ENCODE measurements at regions of chr19 and their contacts with region 1.

Region 1: GRCh38 chr19:40750059-40750873 is at the start of gene ACTMAP:
- DNase-seq: peak; percentile 100
- H3K4me3 Mint-ChIP-seq: peak within 1 kb of the TSS; percentile 99
- H3K27ac Mint-ChIP-seq: peak within 1 kb of the TSS; percentile 99
- H3K4me1 Mint-ChIP-seq: peaks cover 27% of the 10 kb centered on the region
- H3K27me3 Mint-ChIP-seq: no peaks in the 10 kb centered on the region
- total RNA-seq, gene ACTMAP: 9.5 and 10.0 TPM in 2 replicates

Region 2: DNA sequence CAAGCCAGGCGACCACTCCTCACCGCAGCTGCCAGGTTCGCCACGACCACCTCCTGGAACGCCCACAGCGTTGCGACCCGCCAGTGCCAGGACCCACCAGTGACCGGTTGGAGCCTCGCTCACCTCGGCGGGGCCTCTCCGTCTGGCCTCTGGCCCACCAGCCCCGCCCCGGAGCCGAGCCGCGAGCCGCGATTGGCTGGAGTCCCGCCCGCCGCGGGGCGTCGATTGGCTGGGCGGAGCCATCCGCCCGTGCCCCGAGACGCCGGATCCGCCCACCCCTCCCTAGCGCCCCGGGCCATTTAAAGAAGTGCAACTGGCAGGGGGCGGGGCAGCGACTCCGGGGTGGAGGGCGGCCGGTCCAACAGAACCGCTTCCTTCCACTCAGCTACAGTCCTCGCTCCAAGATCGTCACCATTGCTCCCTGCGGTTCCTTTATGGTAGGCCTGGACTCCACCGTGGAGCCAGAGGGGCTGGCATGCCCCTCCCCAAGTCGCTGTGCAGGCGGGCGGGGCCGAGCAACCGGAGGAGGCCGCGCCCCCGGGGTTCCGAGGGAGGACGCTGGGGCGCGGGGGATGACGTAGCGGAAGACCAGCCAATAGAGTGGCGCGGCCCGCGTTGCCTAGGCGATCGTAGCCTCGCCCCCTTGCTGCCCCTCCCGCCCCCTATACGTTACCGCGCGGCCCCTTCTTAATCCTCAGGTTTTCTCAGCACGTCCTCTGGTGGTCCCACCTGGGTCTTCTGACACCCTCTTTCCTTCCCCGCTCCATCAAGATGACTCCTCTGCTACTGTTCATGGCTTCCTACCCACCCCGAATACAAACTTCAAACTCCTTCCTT is 305.9 kb before region 1 on chr19 and contains the start of gene SERTAD3:
- intact Hi-C with region 1: loop called (anchors 1 kb)
- DNase-seq: peak; percentile 97
- H3K4me3 Mint-ChIP-seq: peak within 1 kb of the TSS; percentile 97
- H3K27ac Mint-ChIP-seq: peak within 1 kb of the TSS; percentile 97
- H3K4me1 Mint-ChIP-seq: peaks cover 26% of the 10 kb centered on the region
- H3K27me3 Mint-ChIP-seq: no peaks in the 10 kb centered on the region
- total RNA-seq, gene SERTAD3: 6.4 and 10.0 TPM in 2 replicates

Region 3: GRCh38 chr19:40578442-40578908 is 171.8 kb before region 1 on chr19:
- intact Hi-C with region 1: no loop called
- DNase-seq: no peak
- H3K4me3 Mint-ChIP-seq: peak overlapping the region; percentile 86
- H3K27ac Mint-ChIP-seq: peak overlapping the region; percentile 5
- H3K4me1 Mint-ChIP-seq: peaks cover 17% of the 10 kb centered on the region
- H3K27me3 Mint-ChIP-seq: no peaks in the 10 kb centered on the region

Region 4: DNA sequence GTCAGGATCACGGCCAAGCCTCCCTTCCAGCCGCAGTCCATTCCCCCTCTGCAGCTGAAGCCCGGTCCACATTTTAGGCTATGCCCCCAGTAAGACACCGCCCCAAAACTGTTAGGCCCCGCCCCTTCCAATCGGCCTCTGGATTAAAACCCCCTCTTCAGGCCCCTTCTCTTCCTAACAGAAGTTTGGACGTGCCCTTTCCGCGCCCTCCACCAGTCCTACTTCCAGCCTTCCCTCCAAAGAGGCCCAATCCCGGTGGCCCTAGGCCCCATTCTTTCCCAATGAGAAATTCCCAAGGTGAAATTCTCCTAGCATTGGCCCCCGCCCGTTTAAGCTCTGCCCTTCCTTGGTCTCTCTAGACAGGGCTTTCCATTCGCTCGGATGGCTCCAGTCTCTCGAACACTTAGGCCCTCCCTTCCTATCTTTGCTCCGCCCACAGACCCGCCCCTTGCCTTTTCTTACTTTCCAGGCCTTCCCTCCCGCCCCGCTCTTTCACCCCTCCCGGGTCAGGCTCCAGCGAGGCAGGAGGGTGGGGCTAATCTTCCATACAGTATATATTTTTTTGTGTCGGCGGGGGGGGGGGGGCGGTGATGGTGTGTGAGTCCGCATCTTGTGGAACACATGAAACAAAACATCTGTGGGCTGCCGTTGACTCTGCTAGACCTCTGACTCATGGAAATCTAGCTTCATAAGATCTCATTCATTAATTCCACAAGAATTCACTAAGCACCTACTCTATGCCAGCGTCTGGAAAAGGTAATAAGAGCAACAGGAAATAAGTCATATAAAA is 135.4 kb before region 1 on chr19:
- intact Hi-C with region 1: loop called (anchors 1 kb)
- DNase-seq: peak; percentile 75
- H3K4me3 Mint-ChIP-seq: peak overlapping the region; percentile 97
- H3K27ac Mint-ChIP-seq: peak overlapping the region; percentile 100
- H3K4me1 Mint-ChIP-seq: peaks cover 41% of the 10 kb centered on the region
- H3K27me3 Mint-ChIP-seq: no peaks in the 10 kb centered on the region

Region 5: DNA sequence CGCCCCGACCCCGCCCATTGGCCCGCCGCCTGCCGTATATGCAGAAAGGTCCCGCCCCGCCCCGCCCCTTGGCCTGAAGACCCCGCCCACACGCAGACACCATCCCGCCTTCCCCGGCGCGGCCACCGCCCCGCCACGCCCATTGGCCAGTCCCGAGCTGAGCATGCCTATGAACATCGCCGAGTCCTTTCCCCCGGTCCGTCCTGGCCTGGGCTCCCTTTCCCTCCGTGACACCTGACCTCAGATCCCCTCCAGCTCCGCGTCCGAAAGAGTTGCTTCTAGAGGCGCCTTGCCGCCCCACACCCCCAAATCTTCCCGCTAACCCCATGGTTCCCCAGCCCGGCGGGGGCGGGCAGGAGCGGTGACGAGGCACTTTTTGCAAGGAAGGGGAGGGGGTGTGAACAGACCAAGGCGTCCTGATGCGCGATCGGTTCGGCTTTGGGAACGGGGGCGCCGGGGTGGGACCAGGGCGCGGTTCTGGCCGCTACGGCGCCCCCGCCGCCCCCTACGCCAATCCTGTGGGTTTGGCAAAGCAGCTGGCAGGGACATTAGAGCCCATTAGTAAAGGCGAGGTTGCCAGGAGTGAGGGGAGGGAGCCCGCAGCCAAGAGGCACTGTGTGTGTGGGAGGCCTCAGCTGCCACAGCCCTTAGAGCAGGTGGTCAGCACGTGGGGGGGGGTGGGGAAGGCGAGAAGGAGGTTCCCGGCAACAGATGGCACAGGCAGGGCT is 59.4 kb before region 1 on chr19:
- intact Hi-C with region 1: loop called (anchors 1 kb)
- DNase-seq: peak; percentile 80
- H3K4me3 Mint-ChIP-seq: peak overlapping the region; percentile 87
- H3K27ac Mint-ChIP-seq: peak overlapping the region; percentile 84
- H3K4me1 Mint-ChIP-seq: no peaks in the 10 kb centered on the region
- H3K27me3 Mint-ChIP-seq: no peaks in the 10 kb centered on the region

Region 6: GRCh38 chr19:40798223-40798996 is 48.1 kb after region 1 on chr19:
- intact Hi-C with region 1: loop called (anchors 1 kb)
- DNase-seq: peak; percentile 100
- H3K4me3 Mint-ChIP-seq: peak overlapping the region; percentile 87
- H3K27ac Mint-ChIP-seq: peak overlapping the region; percentile 92
- H3K4me1 Mint-ChIP-seq: peaks cover 56% of the 10 kb centered on the region
- H3K27me3 Mint-ChIP-seq: no peaks in the 10 kb centered on the region

Region 7: GRCh38 chr19:41439441-41440222 is 689.4 kb after region 1 on chr19 and contains the start of gene DMAC2:
- intact Hi-C with region 1: loop called (anchors 1 kb)
- DNase-seq: peak; percentile 93
- H3K4me3 Mint-ChIP-seq: no peak within 1 kb of the TSS
- H3K27ac Mint-ChIP-seq: no peak within 1 kb of the TSS
- H3K4me1 Mint-ChIP-seq: peaks cover 5% of the 10 kb centered on the region
- H3K27me3 Mint-ChIP-seq: peaks cover 5% of the 10 kb centered on the region
- total RNA-seq, gene DMAC2: 56.7 and 57.3 TPM in 2 replicates

Measured in activated T-helper 1 cell treated with anti-CD3 and anti-CD28 coated beads, Interleukin-12 subunit alpha, Interleukin-12 subunit beta, Interleukin-2, Interleukin-4 antibody, amounts not matched to agents 30 ng/mL and 10 ng/mL and 1 ng/mL, durations not matched to agents 14 hours and 24 hours and 36 hours (primary cell).